Left cardiac atrium (tissue), 4 donors: ENCODE measurements at regions of chr10 and their contacts with region 1.

Region 1: GRCh38 chr10:72812753-72813430 is 80.6 kb upstream of the OIT3 start:
- DNase-seq: no peak
- ATAC-seq: peak in 1 of 2 donors; percentile 68

Region 2: DNA sequence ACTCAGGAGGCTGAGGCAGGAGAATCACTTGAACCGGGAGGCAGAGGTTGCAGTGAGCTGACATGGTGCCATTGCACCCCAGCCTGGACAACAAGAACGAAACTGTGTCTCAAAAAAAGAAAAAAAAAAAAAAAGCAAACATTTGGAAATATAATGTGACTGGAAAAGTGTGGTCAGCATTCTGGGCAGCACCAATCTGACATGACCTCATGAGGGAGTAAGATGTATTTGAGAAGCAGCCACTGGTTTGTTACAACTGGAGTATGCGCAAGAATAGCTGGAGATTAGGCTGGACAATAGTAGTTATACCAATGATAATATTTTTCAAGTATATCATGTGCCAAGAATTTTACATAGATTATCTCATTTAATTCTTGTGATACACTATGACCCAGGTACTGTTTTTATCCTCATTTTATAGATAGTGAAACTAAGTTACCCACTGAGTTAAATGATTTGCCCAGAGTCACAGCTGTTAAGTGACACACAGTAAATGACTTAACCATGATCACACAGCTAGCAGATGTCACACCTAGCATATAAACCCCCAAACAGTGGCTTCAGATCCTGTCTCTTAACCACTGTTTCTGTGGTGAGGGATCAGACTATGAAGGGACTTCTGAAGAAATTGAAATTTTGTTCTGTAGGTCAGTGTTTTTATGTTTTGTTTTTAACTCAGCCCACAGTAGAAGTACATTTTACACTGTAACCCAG is 109.9 kb before region 1 on chr10:
- intact Hi-C with region 1: loop called in 1 of 2 experiments (anchors 10 kb)
- DNase-seq: no peak
- ATAC-seq: peak; percentile 55 to 70